Left ventricle myocardium superior (tissue), 1 donor: ENCODE measurements at regions of chr14 and their contacts with region 1.

Region 1: GRCh38 chr14:91059576-91060350 is 678 bp downstream of the RPS6KA5 start:
- DNase-seq: no peak
- ATAC-seq: peak; percentile 65

Region 2: DNA sequence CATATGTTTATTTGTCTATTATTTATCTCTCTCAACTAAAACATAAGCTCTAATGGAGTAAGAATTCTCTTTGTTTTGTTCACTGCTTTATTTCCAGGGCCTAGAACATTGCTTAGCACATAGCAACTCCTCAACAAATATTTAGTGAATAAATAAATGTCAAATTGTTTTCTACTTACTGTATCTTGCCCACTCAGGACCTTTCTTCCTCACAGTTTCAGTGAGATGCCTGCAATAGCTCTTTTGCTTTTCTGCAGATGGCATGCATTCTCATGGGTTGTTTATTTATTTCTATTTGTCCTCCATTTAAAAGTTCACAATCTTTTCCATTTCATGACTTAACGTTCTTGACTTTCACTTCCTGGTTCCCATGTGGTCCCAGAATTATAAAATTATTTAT is 148.6 kb before region 1 on chr14:
- intact Hi-C with region 1: loop called (anchors 10 kb)
- DNase-seq: no peak
- ATAC-seq: no peak

Region 3: GRCh38 chr14:91021991-91022621 is 37.7 kb before region 1 on chr14:
- intact Hi-C with region 1: no loop called
- DNase-seq: no peak
- ATAC-seq: no peak